ENCODE measurements at regions of chr7 and their contacts with region 1.

Region 1: DNA sequence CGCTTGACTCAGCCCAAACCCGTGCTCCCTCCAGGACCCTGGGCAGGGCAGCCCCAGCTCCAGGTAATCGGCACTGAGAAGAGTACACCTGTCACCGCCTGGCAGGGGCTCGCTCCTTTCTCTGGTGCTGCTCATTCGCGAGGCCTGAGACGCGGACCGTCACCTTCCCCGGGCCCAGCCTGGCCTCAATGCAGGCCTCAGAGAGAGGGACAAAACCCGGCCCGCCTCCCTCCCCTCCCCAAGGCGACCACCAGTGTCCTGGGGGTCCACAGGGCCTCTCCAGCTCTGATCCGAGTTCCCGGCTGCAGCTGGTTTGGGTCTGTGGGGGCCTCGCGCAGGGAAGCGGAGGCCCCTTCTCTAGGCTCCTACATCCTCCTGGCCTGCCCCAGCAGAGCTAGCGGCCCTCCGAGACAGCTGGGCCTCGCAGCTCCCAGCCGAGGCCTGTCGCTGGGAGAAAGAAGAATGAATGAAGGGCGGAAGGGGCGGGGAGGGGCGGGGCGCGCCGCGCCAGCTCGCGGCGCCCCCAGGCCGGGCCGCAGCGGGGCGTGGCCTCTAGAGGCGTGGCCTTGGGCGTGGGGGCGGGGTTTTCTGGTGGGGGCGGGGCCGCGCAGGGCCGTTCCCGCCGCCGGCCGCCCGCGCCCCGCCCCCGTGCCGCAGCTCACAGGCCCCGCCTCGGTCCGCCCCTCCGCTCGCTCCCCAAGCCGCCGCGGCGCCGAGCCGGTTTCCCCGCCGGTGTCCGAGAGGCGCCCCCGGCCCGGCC is at the start of gene LIMK1:
- DNase-seq: peak; percentile 75
- ATAC-seq: peak; percentile 70
- H3K4me3 Mint-ChIP-seq: peak within 1 kb of the TSS; percentile 76
- H3K27ac Mint-ChIP-seq: no peak within 1 kb of the TSS; the same call in 1 of the 2 replicates
- H3K4me1 Mint-ChIP-seq: peaks cover 26% of the 10 kb centered on the region
- H3K27me3 Mint-ChIP-seq: no peaks in the 10 kb centered on the region; the same call in 1 of the 2 replicates
- CTCF ChIP-seq: no peak
- total RNA-seq, gene LIMK1: 85.4 to 92.1 TPM (median 90.6 TPM) in 3 replicates

Region 2: GRCh38 chr7:73971704-73972341 is 111.5 kb before region 1 on chr7:
- CTCF ChIA-PET with region 1: no interaction called
- POLR2A ChIA-PET with region 1: no interaction called
- DNase-seq: peak; percentile 76
- ATAC-seq: peak; percentile 98
- H3K4me3 Mint-ChIP-seq: no peak overlapping the region
- H3K27ac Mint-ChIP-seq: no peak overlapping the region
- H3K4me1 Mint-ChIP-seq: peaks cover 6% of the 10 kb centered on the region
- H3K27me3 Mint-ChIP-seq: no peaks in the 10 kb centered on the region; the same call in 1 of the 2 replicates
- CTCF ChIP-seq: peak; percentile 38; the same call in 1 of the 2 replicates

Region 3: GRCh38 chr7:74094224-74095101 is 11.2 kb after region 1 on chr7:
- CTCF ChIA-PET with region 1: interaction called, 18 read pairs
- POLR2A ChIA-PET with region 1: interaction called, 3 read pairs
- DNase-seq: peak; percentile 79
- ATAC-seq: peak; percentile 85
- H3K4me3 Mint-ChIP-seq: peak overlapping the region; percentile 67
- H3K27ac Mint-ChIP-seq: peak overlapping the region; percentile 98
- H3K4me1 Mint-ChIP-seq: peaks cover 30% of the 10 kb centered on the region
- H3K27me3 Mint-ChIP-seq: no peaks in the 10 kb centered on the region
- CTCF ChIP-seq: no peak